HEK293 (cell line): ENCODE measurements at regions of chr10 and their contacts with region 1.

Region 1: DNA sequence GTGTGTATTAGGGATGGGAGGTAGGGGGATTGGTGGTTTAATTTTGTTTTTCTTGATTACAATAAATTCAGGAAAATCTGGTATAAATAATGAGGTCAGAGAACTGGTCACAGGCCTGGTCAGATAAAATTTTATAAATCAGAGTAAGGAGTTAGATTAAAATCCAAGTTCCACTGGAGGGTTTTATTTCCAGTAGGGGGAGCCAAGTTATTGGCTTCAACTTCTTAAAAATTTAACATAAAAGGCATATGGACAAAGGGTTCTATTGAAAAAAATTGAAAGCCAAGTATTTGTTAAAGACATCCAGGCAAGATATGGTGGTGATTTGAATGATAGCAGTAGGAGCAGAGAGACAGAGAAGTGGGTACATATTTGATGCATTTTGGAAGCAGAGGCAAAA is 763.3 kb downstream of the SORCS1 start:
- H3K4me3 ChIP-seq: no peak overlapping the region
- H3K27ac ChIP-seq: no peak overlapping the region
- H3K4me1 ChIP-seq: peaks cover 5% of the 10 kb centered on the region; the same call in 1 of the 2 replicates
- CTCF ChIP-seq: no peak

Region 2: DNA sequence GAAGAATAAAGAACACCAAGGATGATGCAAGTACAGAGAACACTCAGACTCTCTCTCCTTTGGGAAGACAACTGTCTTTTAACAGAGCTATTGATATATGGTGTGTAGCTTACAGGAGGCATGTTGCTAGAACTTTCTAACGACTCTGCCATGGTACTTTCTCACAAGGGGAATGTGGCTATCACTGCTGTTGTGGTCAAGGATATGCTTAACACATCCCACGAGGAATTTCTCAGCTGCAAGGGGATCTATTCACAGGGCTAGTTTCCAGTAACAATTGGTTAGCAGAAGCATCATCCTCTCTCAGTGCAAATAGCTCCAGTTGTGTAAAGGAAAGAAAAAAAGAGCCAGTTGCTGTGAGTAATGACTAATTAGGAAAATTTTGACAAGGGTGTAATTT is 62.7 kb before region 1 on chr10:
- CTCF ChIA-PET with region 1: no interaction called
- POLR2A ChIA-PET with region 1: no interaction called
- H3K4me3 ChIP-seq: no peak overlapping the region
- H3K27ac ChIP-seq: no peak overlapping the region
- H3K4me1 ChIP-seq: no peaks in the 10 kb centered on the region
- CTCF ChIP-seq: no peak

Region 3: DNA sequence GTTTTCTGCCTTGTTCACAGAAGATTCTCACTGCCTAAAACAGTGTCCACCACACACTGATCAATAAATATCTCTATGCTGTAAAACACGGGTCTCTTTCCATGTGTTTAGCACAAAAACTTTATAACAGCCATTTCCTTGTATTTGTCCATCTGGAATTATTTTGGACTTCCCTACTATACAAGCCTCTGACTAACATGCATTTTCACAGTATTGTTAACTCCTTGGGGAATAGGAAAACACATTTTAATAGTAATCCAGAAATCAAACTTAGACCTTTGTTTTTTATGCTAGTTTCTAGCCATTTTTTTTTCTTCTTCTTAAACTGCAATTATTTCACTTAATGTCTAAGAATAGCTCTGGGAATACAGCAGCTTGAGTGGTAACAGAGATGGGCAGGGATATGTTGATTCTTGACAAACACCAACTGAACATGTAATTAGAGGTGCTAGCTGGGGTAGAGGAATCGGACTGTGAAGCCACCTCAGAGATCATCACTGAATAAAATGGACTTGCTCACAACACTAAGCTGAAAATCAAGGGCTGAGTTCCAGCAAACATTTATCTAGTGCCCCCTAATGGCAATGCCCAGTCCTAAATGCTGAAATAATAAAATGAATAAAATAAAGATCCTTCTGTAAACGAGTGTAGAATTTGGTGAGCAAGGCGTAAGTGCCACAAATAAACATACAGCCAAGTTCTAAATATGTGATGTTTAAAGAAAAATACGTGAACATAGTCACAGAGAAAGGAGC is 170.2 kb after region 1 on chr10:
- CTCF ChIA-PET with region 1: interaction called, 24 read pairs
- POLR2A ChIA-PET with region 1: no interaction called
- H3K4me3 ChIP-seq: no peak overlapping the region
- H3K27ac ChIP-seq: no peak overlapping the region
- H3K4me1 ChIP-seq: no peaks in the 10 kb centered on the region
- CTCF ChIP-seq: no peak